Cardiac septum (tissue), 1 donor: ENCODE measurements at regions of chr7 and their contacts with region 1.

Region 1: DNA sequence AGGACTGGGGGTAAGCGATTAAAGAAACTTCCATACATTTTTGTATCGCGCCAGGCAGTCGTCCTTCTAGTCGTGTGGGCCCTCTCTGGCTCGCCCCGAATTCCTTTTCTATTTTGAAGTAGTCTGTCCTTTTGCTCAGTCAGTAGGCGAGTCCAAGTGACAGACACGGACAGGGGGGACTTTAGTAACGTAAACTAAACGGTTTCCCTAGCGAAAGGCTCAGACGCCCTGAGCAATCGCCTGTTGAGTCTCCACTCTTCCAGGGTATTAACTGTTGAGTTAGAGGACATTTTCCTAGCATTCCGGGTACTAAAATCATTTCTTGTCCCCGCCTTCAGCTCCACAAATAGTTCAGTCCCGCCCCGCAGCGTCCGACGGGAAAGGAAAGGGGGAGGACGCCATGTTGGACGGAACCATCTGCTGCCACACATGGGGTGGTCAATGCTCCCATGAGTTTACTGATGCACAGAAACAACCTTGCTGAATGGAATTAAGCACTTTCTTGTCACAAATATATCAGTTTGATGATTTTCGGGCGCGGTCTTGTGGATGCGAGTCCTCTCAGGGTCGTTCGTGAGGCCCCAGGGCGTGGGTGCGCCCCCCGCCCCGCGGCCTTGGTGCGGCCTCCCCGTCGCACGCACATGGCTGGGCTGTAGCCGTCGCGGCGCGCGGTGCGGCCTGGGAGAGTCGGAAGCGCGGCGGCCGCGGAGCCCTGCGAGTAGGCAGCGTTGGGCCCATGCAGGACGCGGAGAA is at the start of gene EIF3B:
- DNase-seq: peak; percentile 92
- total RNA-seq, gene EIF3B: 64.9 TPM

Region 2: DNA sequence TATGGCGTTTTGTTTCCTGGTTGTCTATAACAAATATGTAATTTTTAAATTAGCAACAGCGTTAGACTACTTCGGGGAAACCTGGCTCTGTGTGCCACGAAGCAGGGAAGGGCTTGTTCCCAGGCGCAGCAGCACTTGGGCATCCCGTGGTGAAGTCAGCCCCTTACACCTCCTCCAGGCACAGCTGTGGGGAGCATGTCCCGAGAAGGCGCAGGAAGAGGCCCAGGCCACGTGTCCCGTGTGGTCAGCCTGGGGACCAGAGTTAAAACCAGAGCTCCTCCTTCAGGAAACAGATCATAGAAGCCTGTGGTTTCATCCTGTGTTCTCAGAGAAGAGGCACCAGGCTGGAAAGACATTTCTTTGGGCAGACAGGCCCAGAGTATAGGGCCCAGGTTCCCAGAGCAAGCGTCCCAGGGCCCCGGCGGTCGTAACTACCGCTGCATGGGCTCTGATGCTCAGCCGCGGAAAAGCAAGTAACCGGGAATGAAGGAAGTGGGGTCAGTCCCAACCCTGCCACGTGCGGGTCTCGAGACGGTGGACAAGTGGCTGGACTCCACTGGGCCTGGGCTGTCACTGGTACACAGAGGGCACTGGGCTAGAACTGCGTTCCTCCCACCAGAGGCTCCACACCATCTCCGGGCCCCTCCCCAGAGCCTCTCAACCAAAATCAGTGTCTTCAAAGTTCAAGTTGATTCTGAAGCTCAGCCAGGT is 105.2 kb before region 1 on chr7:
- intact Hi-C with region 1: loop called (anchors 5 kb)
- DNase-seq: peak; percentile 84

Region 3: DNA sequence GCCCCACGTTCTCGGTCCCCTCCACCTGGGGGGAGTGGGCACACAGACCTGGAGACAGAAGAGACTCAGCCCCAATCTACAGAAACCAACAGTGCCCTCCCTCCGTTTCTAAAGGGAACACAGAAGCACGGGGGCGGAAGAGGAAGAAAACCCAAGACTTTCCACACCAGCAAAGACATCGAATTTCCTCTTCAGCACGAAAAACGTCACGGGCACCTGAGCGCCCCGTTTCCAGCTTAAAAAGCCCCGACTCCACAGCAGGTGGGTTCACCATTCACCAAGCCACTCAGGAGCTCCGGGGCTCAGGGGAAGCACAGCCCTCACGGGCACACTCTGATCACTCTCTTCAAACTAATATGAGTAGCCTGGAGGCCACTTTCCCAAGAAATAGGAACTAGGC is 92.8 kb before region 1 on chr7:
- intact Hi-C with region 1: no loop called
- DNase-seq: no peak

Region 4: DNA sequence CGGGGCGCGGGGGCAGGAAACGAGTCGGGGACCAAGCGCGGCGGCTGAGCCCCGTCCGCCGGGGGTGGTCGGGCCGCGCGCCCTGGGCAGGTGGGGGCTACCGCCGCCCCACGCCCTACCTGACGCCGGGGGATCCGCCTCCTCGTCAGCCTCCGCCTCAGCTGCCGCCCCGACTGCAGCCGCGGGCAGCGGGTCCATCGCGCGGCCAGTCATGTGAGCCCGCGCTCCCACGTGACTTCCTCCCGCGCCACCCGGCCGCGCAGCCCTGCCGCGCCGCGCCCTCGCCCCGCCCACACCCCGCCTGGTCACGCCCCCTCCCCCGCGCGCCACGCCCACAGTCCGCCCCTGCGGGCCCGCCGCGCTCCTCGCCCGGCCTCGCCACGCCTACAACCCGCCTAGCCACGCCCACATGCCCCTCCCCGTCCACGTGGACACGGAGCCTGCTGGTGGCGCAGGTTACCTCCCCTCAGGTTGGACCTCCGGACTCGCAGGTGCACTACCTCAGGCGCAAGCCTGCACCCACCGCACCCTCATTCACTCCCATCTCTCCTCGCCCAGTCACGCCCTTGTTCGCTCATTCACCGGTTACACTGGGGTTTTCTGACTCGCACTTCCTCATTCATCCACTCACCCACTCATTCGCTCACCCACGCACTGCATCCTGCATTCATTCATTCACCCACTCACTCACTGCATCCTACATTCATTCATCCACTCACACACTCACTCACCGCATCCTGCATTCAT is 40.0 kb before region 1 on chr7 and contains the start of gene SNX8:
- intact Hi-C with region 1: loop called (anchors 1 kb)
- DNase-seq: peak; percentile 96
- total RNA-seq, gene SNX8: 18.9 TPM

Region 5: DNA sequence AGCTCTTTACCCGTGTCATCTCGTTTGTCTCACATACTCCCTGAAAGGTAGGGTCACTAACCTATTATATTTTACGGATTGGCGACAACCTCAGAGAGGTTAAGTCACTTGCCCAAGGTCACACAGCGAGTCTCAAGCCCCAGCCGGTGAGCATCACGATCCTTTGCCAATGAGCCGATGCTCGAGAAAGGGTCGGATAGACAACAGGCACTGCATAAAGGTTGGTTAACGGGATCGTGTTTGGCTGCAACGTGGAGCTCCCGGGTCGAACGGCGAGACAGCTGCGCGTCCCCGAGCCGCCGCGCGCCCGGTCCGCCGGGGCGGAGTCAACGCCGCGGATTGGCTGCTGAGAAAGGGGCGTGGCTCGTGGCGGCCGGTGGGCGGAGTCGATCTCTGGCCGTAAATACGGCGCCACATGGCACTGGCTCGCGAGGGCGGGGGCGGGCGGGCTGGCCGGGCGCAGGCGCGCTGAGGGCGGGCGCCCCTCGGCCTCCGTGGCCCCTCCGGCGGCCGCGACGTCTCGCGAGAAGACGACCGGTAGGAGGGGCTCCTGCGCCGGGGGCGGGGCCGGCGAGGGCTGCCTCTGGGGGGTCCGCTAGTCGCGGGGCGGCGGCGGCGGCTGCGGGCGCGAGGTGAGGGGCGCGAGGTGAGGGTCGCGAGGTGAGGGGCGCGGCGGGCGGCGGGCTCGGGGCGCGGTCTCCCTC is 48.8 kb after region 1 on chr7 and contains the start of gene CHST12:
- intact Hi-C with region 1: loop called (anchors 5 kb)
- DNase-seq: peak; percentile 98
- total RNA-seq, gene CHST12: 13.8 TPM